Prostate gland (tissue), 2 donors: ENCODE measurements at regions of chr3 and their contacts with region 1.

Region 1: DNA sequence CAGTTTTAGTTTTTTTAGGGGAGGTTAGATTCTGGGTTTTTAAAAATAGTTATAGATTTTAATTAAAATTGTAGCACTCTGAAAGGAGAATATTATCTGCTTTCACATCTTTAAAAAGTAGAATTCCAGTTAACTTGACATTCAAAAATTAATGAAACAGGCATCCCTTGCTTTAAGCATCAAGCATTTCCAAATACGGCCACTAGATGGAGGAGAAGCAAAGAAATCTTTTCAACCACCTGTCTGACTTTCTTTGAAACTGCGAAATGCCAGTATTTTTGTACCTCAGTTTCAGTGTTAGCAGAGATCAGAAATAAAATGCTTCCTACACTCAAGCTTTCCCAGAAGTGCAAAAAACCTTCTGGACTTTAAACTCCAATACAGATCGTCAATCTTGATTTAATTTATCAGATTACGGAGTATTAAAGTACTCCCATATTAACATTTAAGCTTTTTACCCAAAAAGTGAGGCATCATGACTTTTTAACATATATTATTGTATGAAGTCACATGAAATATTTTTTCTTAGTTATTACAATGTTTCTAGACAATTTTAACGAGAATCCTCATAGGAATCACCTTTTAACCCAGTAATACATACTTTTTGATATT is 153.3 kb downstream of the P3H2 start:
- DNase-seq: peak; percentile 34
- H3K4me3 ChIP-seq: no peak overlapping the region
- H3K27ac ChIP-seq: no peak overlapping the region
- H3K4me1 ChIP-seq: no peaks in the 10 kb centered on the region
- H3K27me3 ChIP-seq: no peaks in the 10 kb centered on the region
- CTCF ChIP-seq: peak; percentile 77 to 91 (median 84)
- POLR2A ChIP-seq: no peak

Region 2: DNA sequence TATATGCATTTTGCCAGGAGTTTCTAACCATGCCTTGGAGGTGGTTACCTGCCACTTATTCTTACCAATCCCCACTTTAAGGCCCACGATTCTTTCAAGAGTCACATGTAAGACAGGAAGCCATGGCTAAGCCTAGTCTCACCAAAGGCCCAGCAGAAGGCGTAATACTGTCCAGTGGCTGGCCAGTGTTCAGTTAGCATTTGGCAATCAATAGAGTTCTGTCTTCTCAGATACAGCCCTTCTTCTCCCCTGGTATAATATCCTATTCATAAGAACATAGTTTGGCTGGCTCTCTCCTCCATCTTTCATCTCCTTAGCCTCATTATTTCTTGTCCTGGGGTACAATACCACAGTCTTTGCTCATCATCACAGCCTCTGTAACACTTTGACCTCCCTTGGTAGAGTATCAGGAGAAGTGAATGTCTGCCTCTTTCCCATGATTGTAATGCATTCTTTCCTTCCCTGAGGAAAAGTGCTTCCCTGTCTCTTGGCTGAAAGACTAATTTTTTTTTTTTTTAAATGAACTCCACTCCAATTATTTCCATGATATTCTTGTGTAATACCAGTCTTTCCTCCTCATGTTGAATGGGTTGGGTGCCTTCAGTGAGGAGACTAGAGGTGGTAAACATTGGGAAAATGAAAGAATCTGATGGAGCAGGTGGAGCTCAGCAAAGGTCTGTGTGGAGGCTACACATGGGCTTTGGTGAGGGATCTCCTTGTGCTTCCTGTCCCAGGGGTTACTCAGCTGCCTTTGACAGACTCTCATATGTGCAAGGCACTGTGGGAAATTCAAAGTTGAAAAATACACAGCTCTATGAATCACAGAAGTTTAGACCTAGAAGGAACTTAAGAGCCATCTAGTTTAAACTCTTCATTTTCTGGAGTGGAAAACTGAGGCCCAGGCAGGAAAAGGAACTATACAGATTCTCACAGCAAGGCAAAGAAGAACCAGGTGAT is 64.9 kb before region 1 on chr3:
- intact Hi-C with region 1: no loop called
- DNase-seq: no peak
- H3K4me3 ChIP-seq: no peak overlapping the region
- H3K27ac ChIP-seq: no peak overlapping the region
- H3K4me1 ChIP-seq: no peaks in the 10 kb centered on the region
- H3K27me3 ChIP-seq: no peaks in the 10 kb centered on the region
- CTCF ChIP-seq: no peak
- POLR2A ChIP-seq: no peak

Region 3: DNA sequence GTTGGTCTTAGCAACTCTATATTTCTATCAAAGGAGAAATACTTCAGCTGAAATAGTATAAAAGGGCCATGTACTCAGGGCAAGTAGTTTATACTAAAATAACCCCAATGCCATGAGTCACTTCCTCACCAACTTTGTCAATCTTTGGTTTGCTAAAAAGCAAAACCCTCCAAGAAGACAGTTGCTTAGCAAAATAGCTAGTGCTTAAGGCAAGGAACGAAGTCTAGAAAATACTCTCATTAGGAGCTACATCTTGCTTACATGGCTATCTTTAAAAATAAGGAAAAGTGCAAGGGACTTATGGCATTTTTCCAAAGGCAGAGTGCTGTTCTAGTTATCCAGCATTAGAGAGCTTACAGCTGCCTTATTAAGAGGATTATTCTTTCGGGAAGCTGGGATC is 124.9 kb after region 1 on chr3:
- intact Hi-C with region 1: no loop called
- DNase-seq: no peak
- H3K4me3 ChIP-seq: no peak overlapping the region
- H3K27ac ChIP-seq: no peak overlapping the region
- H3K4me1 ChIP-seq: no peaks in the 10 kb centered on the region
- H3K27me3 ChIP-seq: no peaks in the 10 kb centered on the region
- CTCF ChIP-seq: no peak
- POLR2A ChIP-seq: no peak

Region 4: GRCh38 chr3:190205739-190206138 is 238.4 kb after region 1 on chr3:
- intact Hi-C with region 1: loop called (anchors 2 kb)
- DNase-seq: no peak
- H3K4me3 ChIP-seq: no peak overlapping the region
- H3K27ac ChIP-seq: no peak overlapping the region
- H3K4me1 ChIP-seq: no peaks in the 10 kb centered on the region
- H3K27me3 ChIP-seq: no peaks in the 10 kb centered on the region
- CTCF ChIP-seq: no peak
- POLR2A ChIP-seq: no peak

Region 5: DNA sequence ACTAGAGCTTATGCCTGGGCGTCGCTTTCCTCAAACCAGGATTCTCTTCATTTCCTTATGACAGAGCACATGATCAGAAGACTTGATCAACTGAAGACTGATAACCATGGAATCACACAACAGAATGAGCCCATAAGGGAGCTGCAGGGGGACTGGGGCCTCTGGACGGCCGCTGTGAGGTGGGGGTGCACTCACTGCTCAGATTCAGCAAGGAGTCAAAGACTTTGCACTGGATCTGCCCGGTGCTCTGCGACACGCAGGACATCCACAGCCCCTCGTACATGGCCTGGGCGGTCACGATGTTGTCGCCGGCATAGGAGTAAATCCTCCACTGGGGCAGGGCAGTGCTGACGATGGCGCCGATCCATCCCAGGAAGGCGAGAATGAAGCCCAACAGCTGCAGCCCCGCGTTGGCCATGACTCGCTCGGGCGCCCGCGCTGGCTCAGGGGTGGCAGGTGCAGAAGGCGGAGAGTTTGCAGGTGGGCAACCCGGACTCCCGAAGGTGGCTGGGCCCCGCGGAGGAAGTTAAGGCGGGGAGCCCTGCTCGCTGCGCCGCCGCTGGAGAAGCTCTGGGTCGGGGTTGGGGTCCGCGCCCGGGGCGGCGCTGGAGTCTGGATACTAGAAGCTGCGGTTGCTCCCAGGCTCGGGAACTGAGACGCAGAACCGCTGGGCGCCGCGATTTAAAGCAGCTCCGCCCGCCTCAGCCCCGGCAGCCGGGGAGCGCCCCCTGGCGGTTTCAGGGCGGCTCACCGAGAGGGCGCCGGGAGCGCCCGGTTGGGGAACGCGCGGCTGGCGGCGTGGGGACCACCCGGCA is 354.6 kb after region 1 on chr3 and contains the start of gene CLDN1:
- intact Hi-C with region 1: loop called (anchors 5 kb)
- DNase-seq: peak; percentile 82
- H3K4me3 ChIP-seq: peak within 1 kb of the TSS; percentile 39 to 48
- H3K27ac ChIP-seq: no peak within 1 kb of the TSS
- H3K4me1 ChIP-seq: no peaks in the 10 kb centered on the region
- H3K27me3 ChIP-seq: no peaks in the 10 kb centered on the region
- CTCF ChIP-seq: peak; percentile 78 to 98 (median 91)
- POLR2A ChIP-seq: peak; percentile 81
- total RNA-seq, gene CLDN1: 8.8 to 52.3 TPM